ENCODE measurements at regions of chr5 and their contacts with region 1.

Region 1: GRCh38 chr5:80083101-80083890 is 48.1 kb downstream of the THBS4 start:
- DNase-seq: peak; percentile 23
- H3K4me3 Mint-ChIP-seq: peak overlapping the region; percentile 56
- H3K27ac Mint-ChIP-seq: no peak overlapping the region
- H3K4me1 Mint-ChIP-seq: peaks cover 12% of the 10 kb centered on the region
- H3K27me3 Mint-ChIP-seq: no peaks in the 10 kb centered on the region

Region 2: DNA sequence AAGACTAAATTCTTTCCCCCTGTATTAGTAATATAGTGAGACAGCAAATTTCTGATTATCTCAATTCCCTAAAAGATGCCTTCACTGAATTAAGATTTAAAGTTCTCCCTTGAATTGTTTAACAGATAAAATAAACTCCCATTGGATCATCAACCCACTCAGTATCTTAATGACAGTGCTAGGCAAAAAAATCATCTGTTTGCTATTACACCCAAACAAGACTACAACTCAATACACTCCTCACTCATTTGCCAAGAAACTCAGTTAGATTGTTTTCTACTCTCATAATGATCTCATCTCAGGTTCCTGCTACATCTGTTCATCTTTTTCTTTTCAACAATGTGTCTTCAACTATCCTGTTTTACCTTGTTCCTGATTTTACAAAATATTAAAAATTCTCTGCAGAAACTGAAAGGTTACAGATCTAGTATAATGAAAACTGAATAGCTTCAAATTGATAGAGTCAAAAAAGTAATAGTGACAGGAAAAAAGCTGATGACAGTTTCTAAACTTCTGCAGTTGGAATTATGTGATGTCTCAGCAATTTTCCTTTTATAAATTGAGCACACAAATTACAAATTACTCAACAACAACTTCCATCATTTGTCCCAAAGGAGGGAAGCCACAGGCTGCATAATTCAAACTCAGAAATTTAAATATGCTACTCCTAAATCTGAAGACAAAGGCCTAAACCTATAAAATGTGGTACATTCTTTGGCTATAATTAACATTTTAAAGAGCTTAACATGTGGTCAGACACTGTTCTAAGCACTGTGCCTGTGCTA is 608.7 kb before region 1 on chr5:
- CTCF ChIA-PET with region 1: no interaction called
- intact Hi-C with region 1: loop called (anchors 5 kb)
- DNase-seq: no peak
- H3K4me3 Mint-ChIP-seq: no peak overlapping the region
- H3K27ac Mint-ChIP-seq: no peak overlapping the region
- H3K4me1 Mint-ChIP-seq: peaks cover 3% of the 10 kb centered on the region
- H3K27me3 Mint-ChIP-seq: no peaks in the 10 kb centered on the region

Region 3: DNA sequence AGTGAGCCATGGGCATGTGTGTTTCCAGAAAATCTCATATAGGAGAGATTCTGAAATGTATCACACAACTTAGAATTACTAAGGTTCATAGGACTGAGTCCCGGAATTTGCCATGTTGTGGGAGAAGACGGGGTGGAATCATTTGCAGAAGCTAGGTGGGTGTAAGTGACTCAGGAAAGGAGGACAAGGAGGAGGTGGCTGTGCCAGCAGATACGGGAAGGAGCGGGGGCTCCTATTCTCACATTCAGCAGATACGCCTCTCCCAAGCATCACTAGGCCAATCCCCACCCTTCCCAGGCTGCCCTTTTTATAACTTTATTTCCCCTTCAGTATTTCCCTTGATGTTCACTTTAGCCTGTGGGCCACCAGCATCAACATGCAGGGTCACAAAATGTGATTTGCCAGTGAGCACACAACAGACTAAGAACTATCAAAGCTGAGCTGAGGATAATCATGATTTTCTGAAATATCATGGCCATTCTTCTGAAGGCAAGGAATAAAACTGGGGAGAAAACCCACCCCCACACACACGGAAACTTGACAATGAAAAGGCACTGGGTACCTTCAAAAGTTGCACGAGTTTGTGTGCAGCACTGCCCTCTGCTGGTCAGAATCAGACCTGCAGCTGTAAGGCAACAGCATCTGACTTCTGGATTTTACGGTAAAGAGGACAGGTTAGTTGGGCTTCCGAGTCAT is 225.4 kb before region 1 on chr5:
- CTCF ChIA-PET with region 1: interaction called, 32 read pairs
- intact Hi-C with region 1: loop called (anchors 1 kb)
- DNase-seq: peak; percentile 92
- H3K4me3 Mint-ChIP-seq: no peak overlapping the region
- H3K27ac Mint-ChIP-seq: no peak overlapping the region
- H3K4me1 Mint-ChIP-seq: no peaks in the 10 kb centered on the region
- H3K27me3 Mint-ChIP-seq: no peaks in the 10 kb centered on the region

Region 4: DNA sequence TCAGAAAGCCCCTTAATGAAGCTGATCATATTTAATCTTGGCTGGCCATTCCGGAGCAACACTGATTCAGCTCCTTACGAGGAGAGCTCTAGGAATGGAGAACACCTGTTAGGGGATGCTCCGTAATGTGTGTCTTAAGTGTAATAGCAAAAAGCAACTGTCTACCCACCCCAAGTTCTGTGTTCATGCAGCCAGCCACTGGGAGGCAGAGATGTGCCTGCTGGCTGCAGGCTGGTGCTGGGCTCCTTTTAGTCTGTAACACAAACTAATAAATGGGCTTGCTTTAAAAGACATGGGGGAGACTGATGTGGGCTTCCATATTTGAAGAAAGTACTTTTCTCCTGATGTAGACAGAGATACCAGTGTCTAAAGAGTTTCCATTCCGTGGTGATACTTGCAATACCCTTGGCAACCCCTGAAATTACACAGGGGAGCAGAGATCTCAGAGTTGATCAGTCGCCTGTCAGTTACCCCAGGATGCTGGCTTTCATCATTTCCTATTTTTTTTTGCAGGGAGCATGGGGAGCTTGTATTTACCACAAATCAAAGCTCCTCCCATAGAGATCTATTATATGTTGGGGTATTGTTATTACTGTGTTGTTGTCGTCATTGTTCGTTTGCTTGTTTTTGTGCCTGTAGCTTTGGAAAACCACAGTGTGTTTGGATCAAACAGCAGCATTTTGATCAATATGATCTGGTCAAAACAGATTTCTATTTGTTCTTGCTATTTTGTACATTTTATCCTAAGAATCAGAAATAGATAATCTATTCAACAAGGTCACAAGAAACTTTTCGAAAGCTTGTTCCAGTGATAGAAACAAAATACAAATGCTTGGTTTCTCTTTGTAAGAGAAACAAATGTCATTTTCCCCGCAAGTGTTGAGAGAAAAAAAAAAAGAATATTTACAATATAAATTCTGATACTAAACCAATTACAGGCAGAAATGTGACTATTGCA is 158.1 kb before region 1 on chr5:
- CTCF ChIA-PET with region 1: interaction called, 28 read pairs
- intact Hi-C with region 1: loop called (anchors 1 kb)
- DNase-seq: peak; percentile 30
- H3K4me3 Mint-ChIP-seq: no peak overlapping the region
- H3K27ac Mint-ChIP-seq: no peak overlapping the region
- H3K4me1 Mint-ChIP-seq: no peaks in the 10 kb centered on the region
- H3K27me3 Mint-ChIP-seq: no peaks in the 10 kb centered on the region

Region 5: DNA sequence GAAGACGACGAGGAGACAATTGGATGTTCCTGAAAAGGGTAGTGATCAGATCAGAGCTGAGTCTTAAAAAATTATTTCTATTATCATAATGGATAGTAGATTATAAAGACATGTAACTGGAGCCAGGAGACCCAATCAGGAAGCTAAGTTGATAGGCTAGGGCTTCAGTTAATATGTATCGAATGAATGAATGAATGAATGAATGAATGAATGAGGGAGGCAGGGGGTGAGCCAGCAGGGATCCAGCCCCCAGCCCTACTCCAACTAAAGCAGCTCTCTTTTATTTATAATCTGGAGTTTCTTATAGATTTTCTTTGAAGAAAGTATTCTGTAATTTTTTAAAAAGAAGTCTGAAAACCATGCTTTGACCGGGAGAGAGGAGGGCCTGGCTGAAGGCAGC is 125.6 kb before region 1 on chr5:
- CTCF ChIA-PET with region 1: no interaction called
- intact Hi-C with region 1: no loop called
- DNase-seq: no peak
- H3K4me3 Mint-ChIP-seq: no peak overlapping the region
- H3K27ac Mint-ChIP-seq: no peak overlapping the region
- H3K4me1 Mint-ChIP-seq: peaks cover 2% of the 10 kb centered on the region
- H3K27me3 Mint-ChIP-seq: peaks cover 3% of the 10 kb centered on the region

Region 6: DNA sequence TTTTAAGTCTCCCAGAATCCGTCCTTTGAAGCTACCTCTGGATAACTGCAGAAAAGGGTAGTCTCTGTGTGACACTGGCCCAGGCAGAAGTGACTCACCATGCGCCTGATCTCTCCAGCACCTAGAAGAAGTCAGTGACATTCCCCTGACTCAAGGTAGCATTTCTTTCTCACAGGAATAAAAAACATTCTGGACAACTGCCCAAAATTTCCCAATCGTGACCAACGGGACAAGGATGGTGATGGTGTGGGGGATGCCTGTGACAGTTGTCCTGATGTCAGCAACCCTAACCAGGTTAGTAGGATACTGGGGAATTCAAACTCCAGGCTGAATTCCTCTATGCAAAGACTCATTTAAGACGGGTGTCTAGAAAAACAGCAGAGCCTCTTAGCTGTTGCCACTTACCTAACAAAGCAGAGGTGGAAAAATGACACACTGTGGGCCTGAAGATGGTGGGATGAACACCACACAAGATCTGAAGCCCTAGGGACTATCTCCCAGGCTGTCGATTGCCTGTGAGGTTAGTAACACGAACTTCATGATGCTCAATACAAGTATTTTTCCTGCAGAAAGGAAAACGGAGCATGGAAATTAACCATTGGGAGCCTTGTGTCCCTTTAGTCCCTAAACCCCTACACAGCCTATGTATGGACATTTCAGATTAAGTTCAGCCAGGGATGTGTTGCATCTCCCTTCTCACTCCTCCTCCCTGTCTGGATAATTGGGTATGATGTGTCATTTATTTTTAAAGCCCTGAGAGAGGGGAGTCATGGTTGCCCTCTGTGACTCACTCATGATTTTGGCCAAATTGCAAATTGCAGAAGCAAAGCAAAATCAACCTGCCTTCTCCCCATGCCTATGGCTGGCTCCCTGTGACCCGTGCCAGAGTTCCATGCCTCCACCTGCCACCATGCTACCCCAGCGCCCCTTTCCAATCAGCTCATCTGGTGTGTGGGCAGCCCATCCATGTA is 10.9 kb before region 1 on chr5:
- CTCF ChIA-PET with region 1: interaction called, 15 read pairs
- intact Hi-C with region 1: no loop called
- DNase-seq: no peak
- H3K4me3 Mint-ChIP-seq: no peak overlapping the region
- H3K27ac Mint-ChIP-seq: peak overlapping the region; percentile 47
- H3K4me1 Mint-ChIP-seq: no peaks in the 10 kb centered on the region
- H3K27me3 Mint-ChIP-seq: no peaks in the 10 kb centered on the region

Region 7: DNA sequence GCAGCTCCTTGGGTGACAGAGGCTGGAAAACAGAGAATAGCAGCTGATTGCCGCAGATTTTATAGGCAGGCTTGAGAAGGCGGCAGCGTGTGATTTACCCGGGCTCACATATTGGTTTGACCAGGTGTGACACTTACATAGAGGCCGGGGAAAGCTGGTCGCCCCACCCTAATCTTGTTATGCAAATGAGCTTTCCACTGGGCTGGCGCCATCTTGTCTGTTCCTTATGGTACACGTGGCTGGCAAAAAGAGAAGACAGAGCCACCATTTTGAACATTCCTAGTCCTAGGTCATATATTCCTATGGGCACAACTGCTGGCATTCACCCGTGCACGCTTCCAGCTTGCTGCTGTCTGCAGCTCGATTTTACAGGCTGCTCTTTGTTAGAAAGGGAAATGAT is 225.2 kb after region 1 on chr5:
- CTCF ChIA-PET with region 1: interaction called, 28 read pairs
- intact Hi-C with region 1: no loop called
- DNase-seq: no peak
- H3K4me3 Mint-ChIP-seq: no peak overlapping the region
- H3K27ac Mint-ChIP-seq: no peak overlapping the region
- H3K4me1 Mint-ChIP-seq: no peaks in the 10 kb centered on the region
- H3K27me3 Mint-ChIP-seq: no peaks in the 10 kb centered on the region

Measured in activated naive CD4-positive, alpha-beta T cell treated with anti-CD3 and anti-CD28 coated beads for 36 hours (primary cell).